Aorta (tissue), 5 donors: ENCODE measurements at regions of chr3 and their contacts with region 1.

Region 1: DNA sequence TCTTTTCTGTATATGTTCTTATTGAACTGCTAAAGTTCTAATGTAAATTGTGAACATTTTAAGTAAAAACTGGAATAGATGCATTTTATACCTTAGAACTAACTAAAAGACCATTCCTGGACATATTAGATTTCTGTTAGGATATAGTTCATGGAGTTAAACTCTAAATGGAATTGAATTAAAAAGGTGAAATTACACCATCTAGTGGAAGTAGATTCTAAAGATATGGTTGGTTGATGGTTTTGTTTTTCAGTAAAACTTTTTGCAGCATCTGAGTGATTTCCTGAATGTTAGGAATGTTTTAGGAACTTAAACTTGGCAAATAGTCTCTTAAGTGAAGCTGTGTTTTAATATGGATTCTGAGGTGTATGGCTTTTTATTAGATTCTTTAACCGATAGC is 96.8 kb downstream of the SLMAP start:
- DNase-seq: no peak
- ATAC-seq: no peak
- H3K4me3 ChIP-seq: no peak overlapping the region
- H3K27ac ChIP-seq: no peak overlapping the region
- H3K4me1 ChIP-seq: no peaks in the 10 kb centered on the region
- H3K27me3 ChIP-seq: no peaks in the 10 kb centered on the region

Region 2: GRCh38 chr3:57100046-57100695 is 752.7 kb before region 1 on chr3:
- intact Hi-C with region 1: loop called in 1 of 2 experiments (anchors 10 kb)
- DNase-seq: peak in 1 of 2 donors; percentile 64
- ATAC-seq: peak; percentile 88
- H3K4me3 ChIP-seq: no peak overlapping the region
- H3K27ac ChIP-seq: no peak overlapping the region
- H3K4me1 ChIP-seq: no peaks in the 10 kb centered on the region
- H3K27me3 ChIP-seq: no peaks in the 10 kb centered on the region

Region 3: GRCh38 chr3:57397175-57398026 is 455.5 kb before region 1 on chr3:
- intact Hi-C with region 1: loop called in 1 of 2 experiments (anchors 10 kb)
- DNase-seq: no peak
- ATAC-seq: peak; percentile 78
- H3K4me3 ChIP-seq: no peak overlapping the region
- H3K27ac ChIP-seq: no peak overlapping the region
- H3K4me1 ChIP-seq: no peaks in the 10 kb centered on the region
- H3K27me3 ChIP-seq: no peaks in the 10 kb centered on the region

Region 4: GRCh38 chr3:57951066-57951882 is 98.4 kb after region 1 on chr3:
- intact Hi-C with region 1: no loop called
- DNase-seq: peak; percentile 87 to 89
- ATAC-seq: peak; percentile 94
- H3K4me3 ChIP-seq: no peak overlapping the region
- H3K27ac ChIP-seq: peak overlapping the region; percentile 95 to 98
- H3K4me1 ChIP-seq: peaks cover 0 to 6% of the 10 kb centered on the region in 2 donors
- H3K27me3 ChIP-seq: no peaks in the 10 kb centered on the region